ENCODE measurements at regions of chr3 and their contacts with region 1.

Region 1: DNA sequence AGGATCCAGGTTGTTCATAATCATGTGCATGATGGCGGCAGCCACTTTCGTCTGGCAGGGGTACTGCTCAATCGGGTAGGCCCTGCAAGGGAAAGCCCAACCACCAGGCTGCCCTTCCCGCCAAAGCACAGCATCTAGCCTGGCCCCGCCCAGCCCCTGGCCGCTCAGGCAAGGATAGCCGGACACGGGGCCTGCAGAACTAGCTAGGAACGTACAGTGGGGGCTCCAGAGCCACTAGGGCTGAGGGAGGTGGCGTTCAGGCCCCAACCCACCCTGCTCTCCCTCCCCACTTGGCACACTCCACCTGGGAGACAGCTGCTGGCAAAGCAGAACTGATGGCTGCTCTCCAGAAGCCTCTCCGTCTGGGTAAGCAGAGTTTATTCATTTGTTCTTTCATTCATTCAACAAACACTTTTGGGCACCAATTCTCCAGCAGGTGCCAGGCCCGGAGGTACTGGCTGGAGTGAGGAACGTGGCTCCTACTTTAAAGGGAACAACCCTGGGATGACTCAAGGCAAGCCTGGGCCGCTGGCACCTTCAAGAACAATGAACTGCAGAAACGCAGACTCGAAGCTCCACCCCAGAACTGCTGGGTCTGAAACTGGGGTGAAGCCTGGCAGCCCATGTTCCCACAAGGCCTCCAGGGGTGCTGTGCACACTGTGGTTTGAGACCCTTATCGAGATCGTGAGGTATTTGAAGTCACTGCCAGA is 7.8 kb downstream of the UROC1 start:
- DNase-seq: no peak
- H3K4me3 ChIP-seq: no peak overlapping the region
- H3K27ac ChIP-seq: no peak overlapping the region
- H3K4me1 ChIP-seq: peaks cover 1 to 15% (median 3%) of the 10 kb centered on the region in 4 experiments
- H3K27me3 ChIP-seq: no peaks in the 10 kb centered on the region

Region 2: DNA sequence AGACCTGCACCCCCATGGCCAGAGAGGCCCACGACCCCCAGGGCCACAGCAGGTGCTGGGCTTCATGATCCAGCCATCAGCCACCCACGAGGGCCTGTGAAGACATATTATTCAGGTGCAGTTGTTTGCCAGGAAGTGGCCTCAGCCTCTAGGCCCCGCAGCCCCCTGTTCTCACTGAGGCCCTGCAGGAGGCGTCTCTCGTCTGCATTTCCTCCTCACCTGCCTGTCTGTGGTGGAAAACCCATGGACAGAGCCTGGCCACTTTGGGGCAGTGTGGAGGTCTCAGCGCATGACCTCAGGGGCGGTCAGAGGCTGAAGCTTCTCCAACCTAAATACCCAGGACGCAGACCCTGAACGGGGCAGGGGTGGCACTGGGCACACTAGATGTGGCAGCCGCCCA is 10.8 kb before region 1 on chr3:
- CTCF ChIA-PET with region 1: interaction called, 19 read pairs
- POLR2A ChIA-PET with region 1: no interaction called
- DNase-seq: no peak
- H3K4me3 ChIP-seq: no peak overlapping the region
- H3K27ac ChIP-seq: no peak overlapping the region
- H3K4me1 ChIP-seq: peaks cover 0 to 24% (median 15%) of the 10 kb centered on the region in 4 experiments
- H3K27me3 ChIP-seq: no peaks in the 10 kb centered on the region